ENCODE measurements at regions of chr1 and their contacts with region 1.

Region 1: GRCh38 chr1:8858888-8859706 is 19.4 kb downstream of the ENO1 start:
- DNase-seq: no peak
- ATAC-seq: peak in 1 of 2 donors; percentile 43
- H3K4me3 ChIP-seq: no peak overlapping the region
- H3K27ac ChIP-seq: peak overlapping the region in 3 of 4 donors; percentile 29 to 61 (median 58)
- H3K4me1 ChIP-seq: peaks cover 0 to 24% of the 10 kb centered on the region in 2 donors
- H3K27me3 ChIP-seq: no peaks in the 10 kb centered on the region
- CTCF ChIP-seq: peak; percentile 29 to 60 (median 56)
- POLR2A ChIP-seq: no peak

Region 2: GRCh38 chr1:8712413-8713231 is 146.5 kb before region 1 on chr1:
- in situ Hi-C with region 1: loop called in 1 of 4 experiments (anchors 10 kb)
- intact Hi-C with region 1: no loop called
- DNase-seq: no peak
- ATAC-seq: peak; percentile 74 to 80
- H3K4me3 ChIP-seq: no peak overlapping the region
- H3K27ac ChIP-seq: peak overlapping the region; percentile 30 to 63 (median 40)
- H3K4me1 ChIP-seq: peaks cover 27 to 29% of the 10 kb centered on the region in 2 donors
- H3K27me3 ChIP-seq: no peaks in the 10 kb centered on the region
- CTCF ChIP-seq: no peak
- POLR2A ChIP-seq: no peak

Region 3: GRCh38 chr1:8780405-8780804 is 78.7 kb before region 1 on chr1:
- in situ Hi-C with region 1: no loop called
- intact Hi-C with region 1: no loop called
- DNase-seq: no peak
- ATAC-seq: peak in 1 of 2 donors; percentile 58
- H3K4me3 ChIP-seq: no peak overlapping the region
- H3K27ac ChIP-seq: peak overlapping the region in 1 of 4 donors; percentile 15
- H3K4me1 ChIP-seq: peaks cover 8% of the 10 kb centered on the region in 2 donors
- H3K27me3 ChIP-seq: no peaks in the 10 kb centered on the region
- CTCF ChIP-seq: no peak
- POLR2A ChIP-seq: no peak

Region 4: DNA sequence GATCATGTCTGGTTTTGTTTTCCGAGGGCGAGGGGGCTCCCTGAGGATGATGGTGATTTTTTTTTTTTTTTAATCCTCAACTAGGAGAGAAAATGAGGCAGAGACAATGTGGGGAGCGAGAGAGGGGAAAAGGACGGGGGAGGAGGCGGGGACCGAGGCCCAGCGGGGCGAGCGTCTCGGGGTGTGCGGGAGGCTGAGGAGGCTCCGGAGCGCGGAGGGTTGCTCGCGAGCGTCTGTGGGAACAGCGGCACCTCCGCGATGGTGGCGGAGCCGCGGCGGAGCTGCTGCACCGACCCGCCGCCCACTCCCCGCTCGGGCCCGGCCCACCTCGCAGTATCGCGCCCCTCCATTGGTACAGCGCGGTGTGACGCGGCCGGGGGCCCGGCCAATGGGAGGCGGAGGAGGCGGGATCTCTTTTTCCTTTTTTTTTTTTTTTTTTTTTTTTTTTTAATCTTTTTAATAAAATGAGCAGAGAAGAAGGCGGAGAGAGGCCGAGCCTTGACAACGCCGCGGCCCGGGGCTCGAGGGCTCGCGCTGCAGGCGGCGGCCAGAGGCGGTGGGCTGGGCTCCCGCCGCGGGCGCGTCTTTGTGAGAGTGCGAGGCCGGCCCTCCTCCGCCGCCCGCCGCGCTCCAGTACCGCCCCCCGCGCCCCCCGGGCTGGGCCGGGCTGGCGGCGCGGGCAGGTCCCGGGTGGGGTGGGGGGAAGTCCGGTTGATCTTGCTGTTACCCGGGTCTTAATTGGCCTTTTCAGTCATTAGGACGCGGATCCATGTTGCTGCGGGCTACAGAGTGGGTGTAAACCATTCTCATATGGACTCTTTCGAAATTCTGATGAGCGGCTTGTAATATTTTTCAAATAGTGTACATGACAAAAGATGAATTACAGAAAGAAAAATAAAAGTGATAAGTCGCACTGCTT is 41.4 kb before region 1 on chr1 and contains the start of gene RERE:
- in situ Hi-C with region 1: no loop called
- intact Hi-C with region 1: no loop called
- DNase-seq: peak; percentile 86 to 95
- ATAC-seq: peak; percentile 91 to 92
- H3K4me3 ChIP-seq: peak within 1 kb of the TSS; percentile 82 to 96 (median 94)
- H3K27ac ChIP-seq: peak within 1 kb of the TSS; percentile 97 to 99 (median 98)
- H3K4me1 ChIP-seq: peaks cover 49 to 59% of the 10 kb centered on the region in 2 donors
- H3K27me3 ChIP-seq: no peaks in the 10 kb centered on the region
- CTCF ChIP-seq: peak in 3 of 5 experiments; percentile 8 to 27 (median 23)
- POLR2A ChIP-seq: peak; percentile 94 to 96
- total RNA-seq, gene RERE: 60.8 to 106 (median 102) TPM

Region 5: DNA sequence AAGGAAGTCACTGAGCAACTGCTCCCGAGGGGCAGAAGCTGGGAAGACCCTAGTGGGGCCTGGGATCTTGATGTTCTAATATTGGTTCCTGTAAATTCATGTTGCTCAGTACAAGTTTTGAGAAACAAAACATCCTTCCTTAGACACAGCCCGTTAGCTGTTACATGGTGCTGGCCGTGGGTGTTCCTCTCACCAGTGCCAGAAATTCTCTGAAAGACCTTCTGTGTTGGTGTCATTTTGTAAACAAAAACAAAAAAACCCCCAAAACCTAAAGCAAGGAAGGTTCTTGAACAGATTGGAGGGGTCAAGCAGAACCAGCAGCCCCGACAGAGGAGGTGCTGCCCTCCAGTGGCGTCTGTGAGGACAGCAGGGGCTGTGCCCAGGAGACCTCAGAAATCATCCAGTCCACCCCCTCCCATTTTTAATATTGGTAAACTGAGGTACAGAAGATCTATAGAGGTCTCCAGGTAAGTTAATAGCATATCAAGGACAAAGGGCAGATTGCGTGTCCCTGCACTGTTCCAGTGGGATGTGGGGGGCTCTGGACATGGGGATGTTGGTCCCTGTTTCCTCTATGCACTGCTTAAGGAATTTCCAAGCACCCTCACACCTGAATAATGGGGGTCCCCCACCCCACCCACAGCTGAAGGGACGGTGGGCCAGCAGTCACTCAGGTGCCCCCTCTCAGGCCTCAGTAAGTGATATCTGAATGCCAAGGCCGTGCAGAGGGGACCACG is 129.0 kb after region 1 on chr1:
- in situ Hi-C with region 1: loop called in 2 of 4 experiments (anchors 10 to 25 kb)
- intact Hi-C with region 1: loop called (anchors 5 kb)
- DNase-seq: peak; percentile 10 to 37
- ATAC-seq: peak in 1 of 2 donors; percentile 55
- H3K4me3 ChIP-seq: no peak overlapping the region
- H3K27ac ChIP-seq: no peak overlapping the region
- H3K4me1 ChIP-seq: peaks cover 3 to 5% of the 10 kb centered on the region in 2 donors
- H3K27me3 ChIP-seq: no peaks in the 10 kb centered on the region
- CTCF ChIP-seq: peak; percentile 80 to 92 (median 89)
- POLR2A ChIP-seq: no peak

Measured in gastrocnemius medialis (tissue), 4 donors.